K562 (cell line): ENCODE measurements at regions of chr20 and their contacts with region 1.

Region 1: GRCh38 chr20:38645980-38646858 is 44.6 kb downstream of the ARHGAP40 start:
- DNase-seq: peak; percentile 89 to 94 (median 92)
- ATAC-seq: peak; percentile 96
- H3K4me3 ChIP-seq: peak overlapping the region; percentile 32
- H3K27ac ChIP-seq: no peak overlapping the region
- H3K4me1 ChIP-seq: peaks cover 0 to 7% of the 10 kb centered on the region in 2 experiments; a peak in 3 of 5 replicates
- H3K27me3 ChIP-seq: peaks cover 8 to 33% of the 10 kb centered on the region in 2 experiments; a peak in 3 of 5 replicates
- CTCF ChIP-seq: peak; percentile 88 to 96 (median 94)
- EP300 ChIP-seq: no peak
- POLR2A ChIP-seq: no peak
- RAD21 ChIP-seq: peak; percentile 93 to 97

Region 2: GRCh38 chr20:38337561-38338140 is 308.6 kb before region 1 on chr20:
- CTCF ChIA-PET with region 1: interaction called, 4 read pairs
- POLR2A ChIA-PET with region 1: no interaction called
- in situ Hi-C with region 1: no loop called
- intact Hi-C with region 1: loop called (anchors 5 kb)
- DNase-seq: peak; percentile 82 to 89 (median 85)
- ATAC-seq: peak; percentile 99
- H3K4me3 ChIP-seq: no peak overlapping the region
- H3K27ac ChIP-seq: no peak overlapping the region
- H3K4me1 ChIP-seq: peaks cover 7 to 10% of the 10 kb centered on the region in 2 experiments; a peak in 3 of 5 replicates
- H3K27me3 ChIP-seq: peaks cover 13 to 30% of the 10 kb centered on the region in 2 experiments; a peak in 4 of 5 replicates
- CTCF ChIP-seq: peak; percentile 99 to 100 (median 99)
- EP300 ChIP-seq: no peak
- POLR2A ChIP-seq: no peak
- RAD21 ChIP-seq: peak; percentile 96 to 99

Region 3: GRCh38 chr20:38460040-38460623 is 186.1 kb before region 1 on chr20:
- CTCF ChIA-PET with region 1: no interaction called
- POLR2A ChIA-PET with region 1: no interaction called
- in situ Hi-C with region 1: no loop called
- intact Hi-C with region 1: no loop called
- DNase-seq: peak; percentile 46 to 80 (median 56)
- ATAC-seq: peak; percentile 96
- H3K4me3 ChIP-seq: no peak overlapping the region
- H3K27ac ChIP-seq: no peak overlapping the region
- H3K4me1 ChIP-seq: peaks cover 0 to 9% of the 10 kb centered on the region in 2 experiments; a peak in 2 of 5 replicates
- H3K27me3 ChIP-seq: peaks cover 4 to 15% of the 10 kb centered on the region in 2 experiments; a peak in 4 of 5 replicates
- CTCF ChIP-seq: no peak
- EP300 ChIP-seq: 0 out of 2 replicates have a peak, but pooled peaks have one; percentile 20
- POLR2A ChIP-seq: no peak
- RAD21 ChIP-seq: no peak

Region 4: DNA sequence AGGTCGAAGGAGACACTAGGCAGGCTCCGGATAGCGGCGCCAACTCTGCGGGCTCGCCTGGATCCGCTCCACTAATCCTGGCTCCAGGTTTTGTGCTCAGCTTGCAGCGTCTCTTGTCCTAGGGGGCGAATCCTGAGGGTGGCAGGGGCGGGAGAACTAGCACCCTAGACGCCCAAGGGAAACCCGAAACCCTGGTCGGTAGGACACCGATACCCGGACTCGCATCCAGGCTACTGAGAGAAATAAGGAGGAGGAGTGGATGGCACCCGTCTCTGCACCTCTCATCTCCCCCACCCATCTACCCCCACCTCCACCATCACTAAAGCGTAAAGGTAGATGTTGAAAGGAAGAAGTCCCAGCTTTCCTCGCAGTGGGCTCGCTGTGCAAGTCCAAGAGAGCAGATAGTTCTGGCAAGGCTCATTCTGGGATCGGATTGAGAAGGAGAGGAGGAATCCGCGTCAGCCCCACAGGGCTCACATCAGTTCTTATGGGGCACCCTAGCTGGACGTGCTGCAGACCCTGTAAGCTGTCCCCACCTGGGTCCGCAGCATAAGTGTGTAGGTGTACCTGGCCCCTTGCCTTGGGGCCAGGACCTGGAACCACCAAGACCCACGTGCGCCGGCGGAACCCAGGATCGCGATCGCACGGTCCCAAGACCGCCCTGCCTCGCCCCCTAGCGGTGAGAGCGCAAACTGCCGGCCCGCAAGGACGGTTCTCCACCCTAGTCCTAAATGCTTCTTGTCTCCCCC is 84.9 kb after region 1 on chr20:
- CTCF ChIA-PET with region 1: interaction called, 22 read pairs
- POLR2A ChIA-PET with region 1: no interaction called
- in situ Hi-C with region 1: loop called (anchors 5 kb)
- intact Hi-C with region 1: loop called (anchors 1 kb)
- DNase-seq: peak; percentile 83 to 92 (median 89)
- ATAC-seq: peak; percentile 93
- H3K4me3 ChIP-seq: peak overlapping the region; percentile 37
- H3K27ac ChIP-seq: no peak overlapping the region
- H3K4me1 ChIP-seq: peaks cover 8 to 32% of the 10 kb centered on the region in 2 experiments; a peak in 4 of 5 replicates
- H3K27me3 ChIP-seq: peaks cover 22 to 60% of the 10 kb centered on the region in 2 experiments
- CTCF ChIP-seq: peak; percentile 86 to 97 (median 87)
- EP300 ChIP-seq: no peak
- POLR2A ChIP-seq: no peak
- RAD21 ChIP-seq: peak; percentile 69 to 86

Region 5: DNA sequence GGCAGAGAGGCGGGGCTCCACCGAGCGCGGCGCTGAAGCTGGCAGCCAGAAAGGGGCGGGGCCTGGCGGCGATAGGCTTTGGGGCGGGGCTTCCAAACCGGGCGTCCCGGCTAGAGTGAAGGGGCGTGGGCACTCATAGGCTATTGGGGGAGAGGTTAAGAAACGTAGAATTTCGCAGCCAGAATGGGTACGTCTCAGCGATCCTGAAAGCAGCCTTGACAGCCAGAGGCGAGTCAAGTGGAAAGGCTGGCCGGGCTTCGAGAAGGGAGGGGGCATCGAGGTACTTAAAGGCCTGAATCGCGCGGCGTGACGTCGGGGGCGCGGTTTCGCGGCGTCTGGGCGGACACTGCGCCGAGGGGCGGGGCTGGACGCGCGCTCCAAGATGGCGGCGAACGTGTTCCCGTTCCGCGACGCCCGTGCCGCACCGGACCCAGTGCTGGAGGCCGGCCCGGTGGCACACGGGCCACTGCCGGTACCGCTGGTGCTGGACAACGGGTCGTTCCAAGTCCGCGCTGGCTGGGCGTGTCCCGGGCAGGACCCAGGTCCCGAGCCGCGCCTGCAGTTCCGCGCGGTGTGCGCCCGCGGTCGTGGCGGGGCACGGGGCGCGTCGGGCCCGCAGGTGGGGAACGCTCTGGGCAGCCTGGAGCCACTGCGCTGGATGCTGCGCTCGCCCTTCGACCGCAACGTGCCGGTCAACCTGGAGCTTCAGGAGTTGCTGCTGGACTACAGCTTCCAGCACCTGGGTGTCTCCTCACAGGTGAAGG is 102.1 kb after region 1 on chr20 and contains the start of gene ACTR5:
- CTCF ChIA-PET with region 1: interaction called, 40 read pairs
- POLR2A ChIA-PET with region 1: no interaction called
- in situ Hi-C with region 1: no loop called
- intact Hi-C with region 1: loop called (anchors 1 kb)
- DNase-seq: peak; percentile 91 to 97 (median 96)
- ATAC-seq: peak; percentile 95
- H3K4me3 ChIP-seq: peak within 1 kb of the TSS; percentile 89
- H3K27ac ChIP-seq: peak within 1 kb of the TSS; percentile 77
- H3K4me1 ChIP-seq: peaks cover 12 to 18% of the 10 kb centered on the region in 2 experiments; a peak in 4 of 5 replicates
- H3K27me3 ChIP-seq: no peaks in the 10 kb centered on the region
- CTCF ChIP-seq: no peak
- EP300 ChIP-seq: no peak
- POLR2A ChIP-seq: peak; percentile 82
- RAD21 ChIP-seq: no peak
- polyA plus RNA-seq, gene ACTR5: 0.93 to 1.8 TPM

Region 6: DNA sequence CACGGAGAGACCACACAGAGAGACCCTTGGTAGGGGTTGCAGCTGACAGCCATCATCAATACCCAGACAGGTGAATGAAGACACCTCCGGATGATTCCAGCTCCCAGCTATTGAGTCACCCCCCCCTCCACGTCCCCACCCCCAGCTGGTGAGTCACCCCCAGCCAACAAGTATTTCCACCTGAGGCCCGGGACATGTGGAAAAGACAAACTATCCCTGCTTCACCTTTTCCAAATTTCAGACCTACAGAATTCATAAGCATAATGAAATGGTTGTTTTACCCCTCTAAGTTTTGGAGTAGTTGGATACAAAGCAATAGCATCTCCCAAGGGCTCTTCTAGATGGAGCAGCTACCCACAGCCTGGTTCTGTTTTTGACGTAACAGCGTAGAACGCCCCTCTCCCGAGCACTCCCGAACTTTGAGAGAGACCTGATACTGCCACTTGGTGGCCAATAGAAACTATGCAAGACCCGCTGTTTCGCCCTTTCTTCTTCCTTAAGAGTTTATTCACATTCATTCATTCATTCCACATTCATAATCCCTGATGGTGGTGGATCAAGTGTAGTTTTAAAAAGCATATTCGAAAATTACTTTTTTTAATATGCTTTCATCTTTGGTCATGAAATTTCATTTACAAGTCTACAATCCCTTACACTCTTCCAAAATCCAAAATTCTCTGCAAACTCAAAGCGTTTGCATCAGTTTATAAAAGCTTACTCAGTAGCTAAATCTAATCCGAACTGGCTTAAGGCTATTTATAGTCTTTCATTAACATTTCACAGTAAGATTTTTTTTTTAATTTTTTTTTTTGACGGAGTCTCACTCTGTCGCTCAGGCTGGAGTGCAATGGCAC is 144.2 kb after region 1 on chr20:
- CTCF ChIA-PET with region 1: interaction called, 8 read pairs
- POLR2A ChIA-PET with region 1: no interaction called
- in situ Hi-C with region 1: no loop called
- intact Hi-C with region 1: loop called (anchors 1 kb)
- DNase-seq: peak; percentile 61 to 79 (median 74)
- ATAC-seq: peak; percentile 94
- H3K4me3 ChIP-seq: no peak overlapping the region
- H3K27ac ChIP-seq: no peak overlapping the region
- H3K4me1 ChIP-seq: no peaks in the 10 kb centered on the region
- H3K27me3 ChIP-seq: no peaks in the 10 kb centered on the region
- CTCF ChIP-seq: peak; percentile 71 to 86 (median 82)
- EP300 ChIP-seq: no peak
- POLR2A ChIP-seq: no peak
- RAD21 ChIP-seq: peak; percentile 47 to 75

Region 7: DNA sequence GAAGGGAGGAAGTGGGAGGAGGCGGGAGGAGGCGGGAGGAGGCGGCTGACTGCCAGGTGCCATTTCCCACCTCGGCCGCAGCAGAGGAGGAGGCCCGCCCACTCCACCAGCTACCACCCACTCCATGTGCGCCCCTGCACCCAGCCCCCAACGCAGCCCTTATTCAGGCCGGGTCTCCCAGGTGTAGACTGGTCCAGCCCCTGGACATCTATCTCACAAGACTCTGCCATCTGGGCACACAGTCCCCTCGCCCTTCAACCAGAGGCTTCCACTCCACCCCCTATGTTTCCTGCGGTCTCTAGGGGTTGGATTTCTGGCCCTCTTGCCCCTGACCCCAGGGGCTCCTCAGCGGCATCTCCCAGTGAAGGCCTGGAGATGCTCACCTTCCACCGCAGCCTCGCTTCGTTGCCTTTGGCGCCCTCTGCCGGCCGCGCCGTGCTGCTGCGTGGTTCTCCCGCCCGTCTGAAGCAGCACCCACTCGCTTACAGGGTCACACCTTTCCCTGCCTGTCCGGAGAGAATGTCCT is 247.4 kb after region 1 on chr20:
- CTCF ChIA-PET with region 1: interaction called, 12 read pairs
- POLR2A ChIA-PET with region 1: interaction called, 4 read pairs
- in situ Hi-C with region 1: loop called (anchors 10 kb)
- intact Hi-C with region 1: loop called (anchors 5 kb)
- DNase-seq: peak; percentile 81 to 85 (median 84)
- ATAC-seq: peak; percentile 94
- H3K4me3 ChIP-seq: no peak overlapping the region
- H3K27ac ChIP-seq: no peak overlapping the region
- H3K4me1 ChIP-seq: peaks cover 23 to 34% of the 10 kb centered on the region in 2 experiments
- H3K27me3 ChIP-seq: no peaks in the 10 kb centered on the region
- CTCF ChIP-seq: peak; percentile 85 to 91 (median 91)
- EP300 ChIP-seq: no peak
- POLR2A ChIP-seq: no peak
- RAD21 ChIP-seq: peak; percentile 79 to 91

Region 8: GRCh38 chr20:39049684-39050554 is 403.7 kb after region 1 on chr20:
- CTCF ChIA-PET with region 1: interaction called, 9 read pairs
- POLR2A ChIA-PET with region 1: interaction called, 3 read pairs
- in situ Hi-C with region 1: loop called (anchors 10 kb)
- intact Hi-C with region 1: loop called (anchors 2 kb)
- DNase-seq: peak; percentile 80 to 89 (median 87)
- ATAC-seq: peak; percentile 94
- H3K4me3 ChIP-seq: peak overlapping the region; percentile 55
- H3K27ac ChIP-seq: peak overlapping the region; percentile 65
- H3K4me1 ChIP-seq: peaks cover 8 to 16% of the 10 kb centered on the region in 2 experiments
- H3K27me3 ChIP-seq: peaks cover 0 to 6% of the 10 kb centered on the region in 2 experiments; a peak in 3 of 5 replicates
- CTCF ChIP-seq: peak; percentile 96 to 97 (median 96)
- EP300 ChIP-seq: no peak
- POLR2A ChIP-seq: peak; percentile 76
- RAD21 ChIP-seq: peak; percentile 88 to 93